ENCODE measurements at regions of chr1 and their contacts with region 1.

Region 1: GRCh38 chr1:100866041-100866900 is 28.4 kb downstream of the EXTL2 start:
- DNase-seq: peak; percentile 55
- H3K4me3 Mint-ChIP-seq: no peak overlapping the region
- H3K27ac Mint-ChIP-seq: no peak overlapping the region
- H3K4me1 Mint-ChIP-seq: no peaks in the 10 kb centered on the region
- H3K27me3 Mint-ChIP-seq: no peaks in the 10 kb centered on the region
- CTCF ChIP-seq: peak; percentile 54

Region 2: GRCh38 chr1:99808391-99809115 is 1057.7 kb before region 1 on chr1:
- CTCF ChIA-PET with region 1: interaction called, 7 read pairs
- POLR2A ChIA-PET with region 1: no interaction called
- intact Hi-C with region 1: loop called (anchors 1 kb)
- DNase-seq: peak; percentile 90
- H3K4me3 Mint-ChIP-seq: no peak overlapping the region
- H3K27ac Mint-ChIP-seq: no peak overlapping the region
- H3K4me1 Mint-ChIP-seq: no peaks in the 10 kb centered on the region
- H3K27me3 Mint-ChIP-seq: no peaks in the 10 kb centered on the region
- CTCF ChIP-seq: peak; percentile 49

Region 3: GRCh38 chr1:100277866-100278265 is 588.4 kb before region 1 on chr1:
- CTCF ChIA-PET with region 1: no interaction called
- POLR2A ChIA-PET with region 1: no interaction called
- intact Hi-C with region 1: loop called (anchors 10 kb)
- DNase-seq: peak; percentile 38
- H3K4me3 Mint-ChIP-seq: no peak overlapping the region
- H3K27ac Mint-ChIP-seq: no peak overlapping the region
- H3K4me1 Mint-ChIP-seq: peaks cover 4% of the 10 kb centered on the region
- H3K27me3 Mint-ChIP-seq: no peaks in the 10 kb centered on the region
- CTCF ChIP-seq: no peak

Region 4: DNA sequence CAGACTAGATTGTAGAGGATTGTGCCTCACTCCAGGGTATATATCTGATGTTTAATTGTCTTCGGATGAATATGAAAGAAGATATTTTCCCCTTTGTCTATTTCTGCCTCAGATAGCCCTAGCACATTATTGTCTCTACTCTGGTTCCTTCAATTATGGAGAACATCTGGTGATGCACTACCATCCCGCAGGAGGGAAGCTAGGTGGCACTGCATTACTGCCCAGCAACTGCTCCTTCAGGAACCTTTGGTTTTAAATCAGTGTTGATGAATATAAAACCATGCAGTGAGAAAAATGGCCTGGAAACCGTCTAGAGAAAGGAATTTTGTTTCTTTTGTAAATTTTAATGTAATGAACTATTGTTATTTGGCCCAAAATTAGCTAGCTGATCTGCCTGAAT is 259.8 kb before region 1 on chr1:
- CTCF ChIA-PET with region 1: interaction called, 116 read pairs
- POLR2A ChIA-PET with region 1: no interaction called
- intact Hi-C with region 1: loop called (anchors 1 kb)
- DNase-seq: peak; percentile 61
- H3K4me3 Mint-ChIP-seq: no peak overlapping the region
- H3K27ac Mint-ChIP-seq: no peak overlapping the region
- H3K4me1 Mint-ChIP-seq: no peaks in the 10 kb centered on the region
- H3K27me3 Mint-ChIP-seq: no peaks in the 10 kb centered on the region
- CTCF ChIP-seq: peak; percentile 65

Region 5: DNA sequence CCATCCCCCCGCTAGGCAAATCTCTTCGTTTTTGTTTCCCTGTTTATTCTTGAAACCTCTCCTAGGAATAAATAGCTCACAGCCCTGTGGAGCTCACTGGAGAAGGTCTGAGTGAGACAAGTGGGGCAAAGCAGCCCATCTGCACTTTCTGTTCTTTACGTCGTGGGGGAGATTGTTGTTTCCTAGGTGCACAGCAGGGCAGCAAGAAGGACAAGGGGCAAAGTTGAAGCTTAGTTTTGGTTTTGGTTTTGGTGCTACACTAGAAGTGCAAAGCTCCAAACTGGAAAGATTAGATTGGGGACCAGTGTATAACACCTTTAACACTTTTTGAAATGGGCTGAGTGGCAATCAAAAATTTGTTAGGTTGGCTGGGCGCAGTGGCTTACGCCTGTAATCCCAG is 251.7 kb before region 1 on chr1:
- CTCF ChIA-PET with region 1: interaction called, 31 read pairs
- POLR2A ChIA-PET with region 1: no interaction called
- intact Hi-C with region 1: no loop called
- DNase-seq: no peak
- H3K4me3 Mint-ChIP-seq: no peak overlapping the region
- H3K27ac Mint-ChIP-seq: no peak overlapping the region
- H3K4me1 Mint-ChIP-seq: no peaks in the 10 kb centered on the region
- H3K27me3 Mint-ChIP-seq: no peaks in the 10 kb centered on the region
- CTCF ChIP-seq: no peak

Region 6: GRCh38 chr1:100622037-100622436 is 244.2 kb before region 1 on chr1:
- CTCF ChIA-PET with region 1: interaction called, 11 read pairs
- POLR2A ChIA-PET with region 1: no interaction called
- intact Hi-C with region 1: no loop called
- DNase-seq: peak; percentile 97
- H3K4me3 Mint-ChIP-seq: no peak overlapping the region
- H3K27ac Mint-ChIP-seq: peak overlapping the region; percentile 29
- H3K4me1 Mint-ChIP-seq: peaks cover 30% of the 10 kb centered on the region
- H3K27me3 Mint-ChIP-seq: no peaks in the 10 kb centered on the region
- CTCF ChIP-seq: no peak

Region 7: GRCh38 chr1:100883963-100884362 is 17.7 kb after region 1 on chr1:
- CTCF ChIA-PET with region 1: interaction called, 25 read pairs
- POLR2A ChIA-PET with region 1: interaction called, 3 read pairs
- intact Hi-C with region 1: no loop called
- DNase-seq: peak; percentile 68
- H3K4me3 Mint-ChIP-seq: no peak overlapping the region
- H3K27ac Mint-ChIP-seq: peak overlapping the region; percentile 21
- H3K4me1 Mint-ChIP-seq: peaks cover 19% of the 10 kb centered on the region
- H3K27me3 Mint-ChIP-seq: no peaks in the 10 kb centered on the region
- CTCF ChIP-seq: peak; percentile 15

Measured in MCF 10A (cell line).